ENCODE measurements at regions of chr7 and their contacts with region 1.

Region 1: GRCh38 chr7:99143853-99144672 is at the start of gene SMURF1:
- DNase-seq: peak; percentile 89
- ATAC-seq: peak; percentile 74
- total RNA-seq, gene SMURF1: 9.6 TPM

Region 2: DNA sequence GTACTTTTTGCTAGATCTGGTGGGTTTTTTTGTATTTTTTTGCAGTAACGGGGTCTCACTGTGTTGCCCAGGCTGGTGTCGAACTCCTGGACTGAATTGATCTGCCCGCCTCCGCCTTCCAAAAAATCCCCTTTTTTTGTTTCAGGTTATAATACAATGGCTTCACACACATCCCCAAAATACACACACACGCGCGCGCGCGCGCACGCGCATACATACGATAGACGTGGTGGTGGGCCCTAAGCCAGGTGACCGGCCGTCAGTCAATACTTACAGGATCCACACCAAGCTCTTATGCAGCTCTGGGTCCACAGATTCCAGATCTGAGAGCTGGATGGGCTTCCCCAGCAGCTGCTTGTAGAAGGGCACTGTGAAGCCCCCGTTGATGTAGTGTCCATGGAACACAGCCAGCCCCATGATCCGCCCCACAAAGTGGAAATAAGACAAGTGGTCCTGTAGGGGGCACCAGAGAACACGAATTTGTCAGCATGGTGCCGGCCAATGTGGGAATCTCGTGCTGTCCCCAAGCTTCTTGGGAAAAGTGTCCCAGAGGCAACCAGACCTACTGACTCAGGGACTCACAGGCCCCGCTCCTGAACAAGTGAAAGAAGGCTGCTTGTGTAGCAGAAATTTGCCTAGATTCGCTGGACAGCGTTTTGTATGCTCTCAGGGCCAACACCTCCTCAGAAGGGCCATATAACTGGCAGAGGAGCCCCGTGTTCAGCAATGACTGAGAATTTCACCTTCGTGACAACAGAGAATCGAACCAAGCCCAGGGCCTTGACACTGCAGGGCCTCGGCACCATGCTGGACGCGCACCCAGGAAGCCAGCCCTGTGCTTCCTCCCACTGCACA is 103.7 kb before region 1 on chr7:
- intact Hi-C with region 1: loop called (anchors 5 kb)
- DNase-seq: peak; percentile 81
- ATAC-seq: peak; percentile 85

Region 3: GRCh38 chr7:99109108-99110051 is 34.7 kb before region 1 on chr7:
- intact Hi-C with region 1: loop called (anchors 5 kb)
- DNase-seq: no peak
- ATAC-seq: peak; percentile 76

Region 4: GRCh38 chr7:99120501-99120900 is 23.6 kb before region 1 on chr7:
- intact Hi-C with region 1: loop called (anchors 2 kb)
- DNase-seq: no peak
- ATAC-seq: peak; percentile 47

Region 5: GRCh38 chr7:99210264-99210970 is 66.4 kb after region 1 on chr7:
- intact Hi-C with region 1: no loop called
- DNase-seq: no peak
- ATAC-seq: no peak

Region 6: DNA sequence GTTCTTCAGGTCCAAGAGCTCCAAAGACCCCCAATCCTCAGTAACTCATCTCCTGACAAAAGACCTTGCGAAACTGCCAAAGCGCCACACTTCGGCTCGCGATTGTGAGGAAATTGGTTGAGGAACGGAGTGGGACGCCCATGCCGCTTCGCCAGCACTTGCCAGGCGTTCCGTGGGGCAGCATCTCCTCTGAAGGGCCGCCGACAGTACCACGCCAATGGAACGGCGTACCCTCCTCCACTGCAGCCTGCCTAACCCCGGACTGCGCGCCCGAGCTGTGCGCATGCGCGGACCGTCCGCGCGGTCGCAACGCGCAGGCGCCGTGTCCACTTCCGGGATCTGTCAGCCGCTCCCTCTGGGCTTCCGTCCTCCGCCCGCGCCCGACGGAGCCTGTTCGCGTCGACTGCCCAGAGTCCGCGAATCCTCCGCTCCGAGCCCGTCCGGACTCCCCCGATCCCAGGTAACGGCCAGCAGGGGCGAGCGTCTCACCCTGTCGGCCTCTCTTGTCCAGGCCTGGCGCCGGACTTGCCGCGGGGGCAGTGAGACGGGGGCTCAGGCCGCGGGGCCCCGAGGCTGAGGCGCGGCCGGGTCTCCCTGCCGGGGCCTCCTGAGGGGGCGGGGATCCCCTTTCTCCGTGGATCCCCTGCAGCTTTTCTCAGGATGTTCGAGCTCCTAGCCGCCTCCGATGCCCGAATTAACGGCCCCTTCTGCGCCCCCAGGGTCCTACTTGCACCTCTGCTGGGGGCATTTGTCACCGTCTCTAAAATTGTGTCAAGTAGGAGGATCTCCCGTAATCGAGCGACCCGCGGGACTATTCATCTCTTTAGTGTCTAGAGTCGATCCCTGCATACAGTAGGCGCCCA is 181.7 kb after region 1 on chr7 and contains the start of gene ARPC1A:
- intact Hi-C with region 1: loop called (anchors 10 kb)
- DNase-seq: peak; percentile 94
- ATAC-seq: peak; percentile 98
- total RNA-seq, gene ARPC1A: 139 TPM